SK-N-SH (cell line): ENCODE measurements at regions of chr2 and their contacts with region 1.

Region 1: GRCh38 chr2:137888845-137889244 is 75.4 kb upstream of the HNMT start:
- DNase-seq: peak; percentile 25
- H3K4me3 ChIP-seq: no peak overlapping the region; a peak in 1 of 4 replicates
- H3K27ac ChIP-seq: no peak overlapping the region
- H3K4me1 ChIP-seq: no peaks in the 10 kb centered on the region
- H3K27me3 ChIP-seq: no peaks in the 10 kb centered on the region
- CTCF ChIP-seq: peak; percentile 45; the same call in 1 of the 2 replicates
- EP300 ChIP-seq: no peak
- RAD21 ChIP-seq: peak; percentile 62

Region 2: GRCh38 chr2:137865954-137866540 is 22.8 kb before region 1 on chr2:
- CTCF ChIA-PET with region 1: interaction called, 28 read pairs
- POLR2A ChIA-PET with region 1: no interaction called
- DNase-seq: peak; percentile 36
- H3K4me3 ChIP-seq: no peak overlapping the region; a peak in 1 of 4 replicates
- H3K27ac ChIP-seq: no peak overlapping the region
- H3K4me1 ChIP-seq: no peaks in the 10 kb centered on the region
- H3K27me3 ChIP-seq: no peaks in the 10 kb centered on the region
- CTCF ChIP-seq: peak; percentile 74
- EP300 ChIP-seq: no peak
- RAD21 ChIP-seq: peak; percentile 86

Region 3: GRCh38 chr2:137873521-137874406 is 15.1 kb before region 1 on chr2:
- CTCF ChIA-PET with region 1: interaction called, 34 read pairs
- POLR2A ChIA-PET with region 1: no interaction called
- DNase-seq: no peak
- H3K4me3 ChIP-seq: no peak overlapping the region
- H3K27ac ChIP-seq: no peak overlapping the region
- H3K4me1 ChIP-seq: no peaks in the 10 kb centered on the region
- H3K27me3 ChIP-seq: no peaks in the 10 kb centered on the region
- CTCF ChIP-seq: no peak
- EP300 ChIP-seq: no peak
- RAD21 ChIP-seq: no peak